BJ (cell line): ENCODE measurements at regions of chr18 and their contacts with region 1.

Region 1: GRCh38 chr18:3062798-3063680 is 50.1 kb upstream of the LPIN2 start:
- DNase-seq: no peak
- H3K4me3 ChIP-seq: no peak overlapping the region
- H3K27me3 ChIP-seq: no peaks in the 10 kb centered on the region
- CTCF ChIP-seq: peak; percentile 90

Region 2: GRCh38 chr18:2917259-2918047 is 145.6 kb before region 1 on chr18:
- CTCF ChIA-PET with region 1: no interaction called
- POLR2A ChIA-PET with region 1: no interaction called
- DNase-seq: no peak
- H3K4me3 ChIP-seq: no peak overlapping the region
- H3K27me3 ChIP-seq: no peaks in the 10 kb centered on the region
- CTCF ChIP-seq: no peak

Region 3: GRCh38 chr18:2932247-2933181 is 130.5 kb before region 1 on chr18:
- CTCF ChIA-PET with region 1: interaction called, 14 read pairs
- POLR2A ChIA-PET with region 1: no interaction called
- DNase-seq: no peak
- H3K4me3 ChIP-seq: no peak overlapping the region
- H3K27me3 ChIP-seq: no peaks in the 10 kb centered on the region
- CTCF ChIP-seq: peak; percentile 62

Region 4: DNA sequence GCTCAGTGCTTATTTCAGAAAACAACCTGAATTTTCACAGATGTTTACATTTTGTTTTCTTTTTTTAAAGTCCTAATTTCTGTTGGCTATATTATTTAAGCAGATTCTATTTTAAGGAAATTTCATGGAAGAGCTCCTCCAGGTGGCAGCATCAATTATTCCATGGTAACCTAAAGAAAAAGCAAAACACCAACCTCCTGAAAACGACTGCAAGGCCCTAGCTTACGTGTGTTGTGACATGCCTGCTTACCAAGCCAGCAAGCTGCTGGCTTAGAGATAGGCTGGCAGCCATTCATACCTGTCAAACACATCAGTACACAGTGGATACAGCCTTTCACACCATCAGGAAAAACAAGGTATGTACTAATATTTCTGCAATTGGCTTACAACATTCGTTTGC is 115.0 kb before region 1 on chr18:
- CTCF ChIA-PET with region 1: interaction called, 19 read pairs
- POLR2A ChIA-PET with region 1: no interaction called
- DNase-seq: no peak
- H3K4me3 ChIP-seq: no peak overlapping the region
- H3K27me3 ChIP-seq: no peaks in the 10 kb centered on the region
- CTCF ChIP-seq: peak; percentile 47

Region 5: GRCh38 chr18:3052411-3052758 is 10.7 kb before region 1 on chr18:
- CTCF ChIA-PET with region 1: interaction called, 11 read pairs
- POLR2A ChIA-PET with region 1: no interaction called
- DNase-seq: no peak
- H3K4me3 ChIP-seq: no peak overlapping the region
- H3K27me3 ChIP-seq: no peaks in the 10 kb centered on the region
- CTCF ChIP-seq: no peak

Region 6: DNA sequence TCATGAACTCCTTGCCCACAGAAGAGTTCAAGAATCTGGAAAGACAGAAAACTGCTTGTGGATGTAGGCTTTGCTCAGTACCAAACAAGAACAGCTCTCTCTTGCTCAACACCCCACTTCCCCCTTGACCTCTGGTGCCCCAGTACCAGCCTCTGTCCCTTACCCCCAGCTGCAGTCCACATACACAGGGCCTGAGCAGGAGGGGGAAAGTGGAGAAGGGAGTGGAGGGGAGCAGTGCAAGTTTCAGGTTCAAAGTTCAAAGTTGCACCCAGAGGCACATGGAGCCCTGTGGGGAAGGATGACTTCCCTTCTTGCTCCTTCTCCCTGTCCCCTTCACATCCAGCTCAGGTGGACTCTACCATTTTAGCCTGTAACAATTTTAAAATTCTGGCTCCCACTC is 11.0 kb after region 1 on chr18:
- CTCF ChIA-PET with region 1: interaction called, 47 read pairs
- POLR2A ChIA-PET with region 1: no interaction called
- DNase-seq: no peak
- H3K4me3 ChIP-seq: no peak overlapping the region
- H3K27me3 ChIP-seq: no peaks in the 10 kb centered on the region
- CTCF ChIP-seq: no peak

Region 7: GRCh38 chr18:3088449-3088848 is 25.4 kb after region 1 on chr18:
- CTCF ChIA-PET with region 1: interaction called, 11 read pairs
- POLR2A ChIA-PET with region 1: no interaction called
- DNase-seq: no peak
- H3K4me3 ChIP-seq: no peak overlapping the region
- H3K27me3 ChIP-seq: no peaks in the 10 kb centered on the region
- CTCF ChIP-seq: no peak

Region 8: DNA sequence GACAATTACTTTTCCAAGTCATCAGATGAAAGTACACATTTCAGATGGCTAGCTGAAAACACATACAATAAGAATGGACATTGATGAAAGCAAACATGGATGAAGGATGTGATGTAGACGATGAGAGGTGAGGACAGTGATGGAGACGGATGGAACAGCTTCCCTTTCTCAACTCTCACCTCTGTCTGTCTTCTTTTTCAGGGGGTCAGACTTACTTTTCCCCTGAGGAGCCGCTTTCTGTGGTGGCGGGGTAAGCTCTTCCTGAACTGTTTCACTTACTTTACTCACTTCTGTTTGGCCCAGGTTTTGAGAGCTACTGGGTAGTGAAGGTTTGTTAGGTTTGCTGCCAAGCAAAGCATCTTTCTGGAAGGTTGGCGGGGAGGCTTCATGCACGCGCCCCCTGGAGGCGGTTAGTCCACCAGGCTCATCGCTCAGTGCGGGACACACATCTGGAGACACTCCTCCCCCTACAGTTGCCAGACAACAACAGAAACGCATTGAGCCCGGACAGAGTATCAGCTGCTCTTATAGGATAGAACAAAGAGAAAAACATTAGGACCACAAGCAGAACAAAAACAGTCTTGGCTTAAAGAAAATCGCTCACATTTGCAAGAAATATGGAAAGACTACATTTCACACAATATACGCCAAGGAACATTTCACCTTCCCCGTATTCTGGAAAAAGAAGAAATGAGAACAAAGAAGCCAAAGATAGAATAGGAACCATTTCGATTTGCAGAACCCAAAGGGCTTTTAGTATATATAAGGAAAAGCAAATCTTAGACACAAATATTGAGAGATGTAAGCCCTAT is 66.2 kb after region 1 on chr18:
- CTCF ChIA-PET with region 1: interaction called, 13 read pairs
- POLR2A ChIA-PET with region 1: no interaction called
- DNase-seq: peak; percentile 24
- H3K4me3 ChIP-seq: no peak overlapping the region
- H3K27me3 ChIP-seq: no peaks in the 10 kb centered on the region
- CTCF ChIP-seq: peak; percentile 97

Region 9: DNA sequence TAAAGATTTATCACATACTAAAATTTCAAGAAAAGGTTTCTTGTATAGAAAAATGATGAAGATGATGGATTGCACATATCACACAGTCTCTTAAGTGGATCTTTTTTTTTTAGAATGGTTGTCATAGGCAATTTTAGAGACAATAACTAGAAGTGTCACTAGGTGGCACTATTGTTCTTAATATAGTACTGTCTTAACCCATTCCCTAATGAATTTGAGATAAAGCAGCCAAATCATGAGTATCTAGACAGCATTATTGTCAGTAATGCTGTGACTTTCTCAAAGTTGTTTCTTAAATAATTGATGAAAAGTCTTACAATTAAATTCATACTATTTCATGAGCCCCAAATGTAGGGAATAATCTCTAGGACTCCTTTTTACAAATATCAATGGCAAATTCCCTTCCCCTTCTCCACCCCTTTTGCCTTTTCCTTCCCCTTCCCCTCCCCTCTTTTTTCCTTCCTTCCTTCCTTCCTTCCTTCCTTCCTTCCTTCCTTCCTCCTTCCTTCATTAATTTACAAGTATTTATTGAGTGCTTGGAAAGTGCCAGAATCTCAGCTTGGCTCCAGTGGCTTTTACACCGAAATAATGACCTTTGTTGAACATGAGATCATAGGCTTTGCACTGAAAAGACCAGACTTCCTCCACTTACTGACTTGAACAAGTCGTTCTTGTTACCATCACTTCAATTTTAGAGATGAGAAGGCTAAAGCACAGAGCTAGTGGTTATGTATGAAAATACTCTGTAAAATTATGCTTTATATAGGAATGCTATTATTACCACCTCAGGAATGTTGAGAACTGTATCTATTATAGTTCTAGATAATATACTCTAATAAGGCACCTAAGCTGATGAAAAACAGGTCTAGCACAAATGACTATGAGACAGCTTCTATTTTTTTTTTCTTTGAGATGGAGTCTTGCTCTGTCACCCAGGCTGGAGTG is 218.7 kb after region 1 on chr18:
- CTCF ChIA-PET with region 1: no interaction called
- POLR2A ChIA-PET with region 1: no interaction called
- DNase-seq: peak; percentile 60
- H3K4me3 ChIP-seq: no peak overlapping the region
- H3K27me3 ChIP-seq: no peaks in the 10 kb centered on the region
- CTCF ChIP-seq: peak; percentile 31; the same call in 1 of the 2 replicates